ENCODE measurements at regions of chr14 and their contacts with region 1.

Region 1: GRCh38 chr14:21723431-21724045 is 49.9 kb upstream of the OR4E1 start:
- DNase-seq: peak; percentile 97
- H3K4me3 ChIP-seq: peak overlapping the region; percentile 63
- H3K27ac ChIP-seq: peak overlapping the region; percentile 98
- H3K4me1 ChIP-seq: peaks cover 64% of the 10 kb centered on the region
- H3K27me3 ChIP-seq: no peaks in the 10 kb centered on the region
- CTCF ChIP-seq: peak; percentile 95

Region 2: GRCh38 chr14:21383848-21384493 is 339.6 kb before region 1 on chr14 and contains the start of gene SUPT16H:
- CTCF ChIA-PET with region 1: no interaction called
- POLR2A ChIA-PET with region 1: no interaction called
- intact Hi-C with region 1: no loop called
- DNase-seq: peak; percentile 99
- H3K4me3 ChIP-seq: peak within 1 kb of the TSS; percentile 75
- H3K27ac ChIP-seq: peak within 1 kb of the TSS; percentile 96
- H3K4me1 ChIP-seq: peaks cover 22% of the 10 kb centered on the region
- H3K27me3 ChIP-seq: no peaks in the 10 kb centered on the region
- CTCF ChIP-seq: no peak
- total RNA-seq, gene SUPT16H: 193 and 196 TPM in 2 replicates

Region 3: DNA sequence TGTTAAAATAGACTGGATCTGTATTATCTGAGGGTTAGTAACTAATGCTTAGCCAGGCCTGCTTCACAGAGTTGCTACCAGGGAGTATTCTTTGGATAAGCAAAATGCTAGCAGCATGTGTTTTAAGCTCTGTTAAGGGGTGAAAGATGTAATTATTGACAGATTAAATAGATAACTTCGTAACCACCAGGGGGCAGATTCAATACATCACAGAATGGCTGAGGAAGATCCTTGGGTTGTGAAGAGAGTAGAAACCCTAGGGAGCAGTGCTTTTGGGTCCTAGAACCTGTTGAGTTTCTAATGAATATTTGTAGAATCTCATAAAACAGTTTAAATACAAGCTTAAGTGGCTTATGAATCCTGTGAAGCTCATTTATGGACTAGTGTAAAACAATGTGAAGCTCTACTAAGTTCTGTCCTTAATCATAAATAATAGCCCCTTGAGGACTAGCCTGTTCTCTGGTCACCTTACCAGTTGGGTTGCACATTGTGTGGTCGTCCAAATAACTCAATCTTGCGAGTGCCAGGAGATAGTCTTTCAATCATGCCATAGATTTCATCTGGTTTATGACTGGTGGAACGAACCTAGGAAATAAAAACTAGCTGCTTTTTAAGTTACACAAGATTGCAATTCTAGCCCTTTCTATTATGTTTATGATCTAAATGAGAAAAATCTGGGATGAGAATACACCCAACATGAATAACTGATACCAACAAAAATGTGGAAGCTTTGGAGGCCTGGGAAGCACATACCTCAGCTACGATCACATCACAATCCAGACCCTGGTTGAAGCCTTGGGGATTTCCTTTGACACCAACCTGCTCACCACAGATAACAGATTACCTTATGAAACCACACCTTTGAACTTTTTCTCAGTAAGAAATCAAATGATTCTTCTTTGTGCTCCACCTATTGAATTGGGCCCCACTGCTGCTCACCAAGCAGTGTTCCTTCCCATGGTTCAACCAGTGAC is 224.7 kb before region 1 on chr14:
- CTCF ChIA-PET with region 1: no interaction called
- POLR2A ChIA-PET with region 1: interaction called, 15 read pairs
- intact Hi-C with region 1: no loop called
- DNase-seq: peak; percentile 85
- H3K4me3 ChIP-seq: no peak overlapping the region
- H3K27ac ChIP-seq: no peak overlapping the region
- H3K4me1 ChIP-seq: no peaks in the 10 kb centered on the region
- H3K27me3 ChIP-seq: no peaks in the 10 kb centered on the region
- CTCF ChIP-seq: peak; percentile 74

Region 4: GRCh38 chr14:21536418-21537089 is 187.0 kb before region 1 on chr14:
- CTCF ChIA-PET with region 1: no interaction called
- POLR2A ChIA-PET with region 1: no interaction called
- intact Hi-C with region 1: loop called (anchors 5 kb)
- DNase-seq: no peak
- H3K4me3 ChIP-seq: peak overlapping the region; percentile 85
- H3K27ac ChIP-seq: peak overlapping the region; percentile 99
- H3K4me1 ChIP-seq: peaks cover 52% of the 10 kb centered on the region
- H3K27me3 ChIP-seq: no peaks in the 10 kb centered on the region
- CTCF ChIP-seq: no peak

Region 5: DNA sequence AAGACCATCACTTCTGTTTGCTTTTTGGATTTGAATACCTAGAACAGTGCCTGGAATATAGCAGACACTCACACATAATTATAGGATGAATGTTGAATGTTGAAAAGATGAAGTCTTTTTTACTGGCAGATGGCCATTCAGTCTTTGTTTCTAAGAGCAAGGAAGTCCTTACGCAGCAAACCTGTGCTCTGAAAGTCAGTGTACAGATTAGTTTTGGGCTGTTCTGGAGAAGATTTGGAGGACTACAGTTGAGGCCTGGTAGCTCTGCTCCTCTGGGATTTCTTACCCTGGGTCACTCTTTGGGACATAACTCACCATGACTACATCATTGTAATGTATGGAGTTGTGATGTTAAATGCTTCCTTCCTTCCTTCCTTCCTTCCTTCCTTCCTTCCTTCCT is 66.6 kb before region 1 on chr14:
- CTCF ChIA-PET with region 1: interaction called, 3 read pairs
- POLR2A ChIA-PET with region 1: interaction called, 18 read pairs
- intact Hi-C with region 1: loop called (anchors 1 kb)
- DNase-seq: peak; percentile 98
- H3K4me3 ChIP-seq: no peak overlapping the region
- H3K27ac ChIP-seq: peak overlapping the region; percentile 100
- H3K4me1 ChIP-seq: peaks cover 84% of the 10 kb centered on the region
- H3K27me3 ChIP-seq: no peaks in the 10 kb centered on the region
- CTCF ChIP-seq: no peak

Region 6: DNA sequence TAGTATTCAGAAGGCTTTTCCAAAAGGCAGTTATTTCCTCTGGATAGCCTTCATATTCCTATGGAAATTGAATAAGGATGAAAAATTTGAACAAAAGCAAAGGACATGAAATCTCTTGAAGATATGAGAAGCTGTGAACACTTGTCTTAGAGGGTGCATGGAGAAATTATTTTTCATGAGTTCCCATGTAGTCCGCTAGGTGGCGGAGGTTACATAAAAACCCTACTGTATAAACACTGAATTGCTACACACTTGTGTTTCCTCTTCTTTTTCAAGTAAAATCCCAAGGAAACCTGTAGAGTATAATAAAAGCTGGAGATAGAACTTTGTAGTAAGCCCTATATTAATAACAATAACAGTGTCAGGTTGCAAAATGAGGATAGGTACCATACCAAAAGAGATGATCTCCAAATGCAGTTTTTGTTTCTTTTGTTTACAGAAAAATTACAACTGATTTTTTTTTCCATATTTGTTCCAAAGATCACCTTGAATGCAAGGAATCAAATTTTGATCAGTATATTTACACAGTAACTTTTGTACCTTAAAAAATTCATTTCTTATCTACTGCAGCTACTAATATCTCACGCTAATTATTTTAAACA is 12.1 kb before region 1 on chr14:
- CTCF ChIA-PET with region 1: interaction called, 13 read pairs
- POLR2A ChIA-PET with region 1: no interaction called
- intact Hi-C with region 1: no loop called
- DNase-seq: peak; percentile 79
- H3K4me3 ChIP-seq: no peak overlapping the region
- H3K27ac ChIP-seq: peak overlapping the region; percentile 49
- H3K4me1 ChIP-seq: peaks cover 14% of the 10 kb centered on the region
- H3K27me3 ChIP-seq: no peaks in the 10 kb centered on the region
- CTCF ChIP-seq: peak; percentile 84

Region 7: GRCh38 chr14:21739054-21739453 is 15.5 kb after region 1 on chr14:
- CTCF ChIA-PET with region 1: interaction called, 15 read pairs
- POLR2A ChIA-PET with region 1: no interaction called
- intact Hi-C with region 1: no loop called
- DNase-seq: no peak
- H3K4me3 ChIP-seq: no peak overlapping the region
- H3K27ac ChIP-seq: no peak overlapping the region
- H3K4me1 ChIP-seq: peaks cover 14% of the 10 kb centered on the region
- H3K27me3 ChIP-seq: no peaks in the 10 kb centered on the region
- CTCF ChIP-seq: no peak

Region 8: DNA sequence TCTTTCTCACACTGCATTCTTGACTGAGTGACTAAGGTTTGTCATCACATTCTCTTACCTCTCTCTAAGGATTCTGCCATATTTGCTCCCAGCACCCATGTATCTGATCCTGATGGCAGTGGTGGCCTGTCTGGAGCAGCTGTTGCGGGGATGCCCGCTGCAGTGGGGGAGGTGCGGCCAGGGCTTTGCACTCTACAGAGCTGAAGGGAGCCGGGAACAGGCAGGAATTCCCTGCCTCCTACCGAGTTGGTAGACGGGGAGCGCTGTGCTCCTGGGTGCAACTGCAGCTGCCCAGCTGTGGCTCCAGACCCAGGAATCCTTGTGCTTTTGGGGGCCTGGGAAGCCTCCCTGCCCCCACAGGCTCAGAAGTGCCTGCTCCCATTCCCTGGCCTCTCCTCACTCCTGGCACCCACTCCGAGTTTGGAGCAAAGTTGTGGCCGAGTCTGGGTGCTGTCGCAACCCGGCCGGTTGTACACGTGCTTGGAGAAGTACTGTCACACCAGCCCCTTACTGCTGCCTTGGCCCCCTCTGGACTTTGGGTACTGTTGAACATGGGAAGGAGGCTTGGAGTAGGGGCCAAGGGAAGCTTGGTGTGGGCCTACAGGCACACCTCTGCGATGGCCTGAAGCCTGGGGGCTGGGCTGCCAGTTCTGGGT is 57.0 kb after region 1 on chr14:
- CTCF ChIA-PET with region 1: no interaction called
- POLR2A ChIA-PET with region 1: no interaction called
- intact Hi-C with region 1: no loop called
- DNase-seq: no peak
- H3K4me3 ChIP-seq: no peak overlapping the region
- H3K27ac ChIP-seq: no peak overlapping the region
- H3K4me1 ChIP-seq: no peaks in the 10 kb centered on the region
- H3K27me3 ChIP-seq: no peaks in the 10 kb centered on the region
- CTCF ChIP-seq: no peak

Measured in A673 (cell line).